GM10248 (cell line): ENCODE measurements at regions of chr5 and their contacts with region 1.

Region 1: GRCh38 chr5:138352071-138352721 is at the start of gene KDM3B:
- DNase-seq: peak; percentile 95
- CTCF ChIP-seq: peak; percentile 100

Region 2: GRCh38 chr5:138213161-138214029 is 138.8 kb before region 1 on chr5 and contains the start of gene CDC23:
- CTCF ChIA-PET with region 1: interaction called, 11 read pairs
- POLR2A ChIA-PET with region 1: no interaction called
- DNase-seq: peak; percentile 98
- CTCF ChIP-seq: no peak

Region 3: GRCh38 chr5:138241688-138242571 is 110.3 kb before region 1 on chr5:
- CTCF ChIA-PET with region 1: interaction called, 21 read pairs
- POLR2A ChIA-PET with region 1: no interaction called
- DNase-seq: peak; percentile 37
- CTCF ChIP-seq: no peak

Region 4: DNA sequence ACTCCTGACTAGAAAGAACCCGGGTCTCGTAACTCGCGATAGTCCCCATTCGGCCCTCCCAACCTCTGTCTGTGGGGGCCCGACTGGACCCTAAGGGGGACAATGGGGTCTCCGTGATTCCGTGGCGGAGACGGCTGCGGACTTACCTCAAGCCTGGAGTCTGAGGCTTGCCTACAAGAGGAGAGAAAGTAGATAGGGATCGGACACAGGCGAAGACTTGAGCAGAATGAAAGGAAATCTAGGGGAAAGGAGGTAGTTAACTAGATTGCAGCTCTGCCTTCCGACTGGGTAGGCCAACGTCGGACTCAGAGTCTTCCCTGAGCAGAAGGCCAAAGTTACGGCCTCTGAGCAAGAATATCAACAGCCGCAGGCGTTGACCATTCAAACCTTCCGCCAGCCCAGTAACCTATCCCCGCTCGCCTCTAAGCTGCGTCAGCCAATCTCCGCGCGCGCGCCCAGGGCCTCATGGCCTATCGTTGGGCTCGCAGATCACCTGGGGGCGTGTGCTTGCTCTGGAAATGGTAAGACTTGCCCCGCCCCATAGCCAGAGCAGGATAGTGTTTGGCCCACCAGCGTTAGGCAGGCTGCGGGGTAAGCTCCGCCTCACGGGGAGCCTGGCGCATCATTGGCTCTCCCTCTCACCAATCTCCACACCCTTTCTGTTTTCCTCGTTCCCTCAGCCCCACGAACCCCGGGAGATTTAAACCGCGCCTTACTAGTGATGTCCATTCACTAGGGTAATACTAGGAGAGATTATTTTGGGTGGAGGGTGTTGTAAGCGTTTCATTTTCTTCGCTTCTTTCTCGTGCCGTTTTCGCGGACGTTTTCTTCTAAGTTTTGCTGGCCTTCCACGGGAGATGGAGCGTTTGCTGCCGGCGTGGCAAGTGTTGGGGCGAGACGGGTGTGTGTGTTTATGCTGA is 20.5 kb before region 1 on chr5 and contains the start of gene CDC25C:
- CTCF ChIA-PET with region 1: interaction called, 403 read pairs
- POLR2A ChIA-PET with region 1: interaction called, 166 read pairs
- DNase-seq: peak; percentile 98
- CTCF ChIP-seq: no peak

Region 5: DNA sequence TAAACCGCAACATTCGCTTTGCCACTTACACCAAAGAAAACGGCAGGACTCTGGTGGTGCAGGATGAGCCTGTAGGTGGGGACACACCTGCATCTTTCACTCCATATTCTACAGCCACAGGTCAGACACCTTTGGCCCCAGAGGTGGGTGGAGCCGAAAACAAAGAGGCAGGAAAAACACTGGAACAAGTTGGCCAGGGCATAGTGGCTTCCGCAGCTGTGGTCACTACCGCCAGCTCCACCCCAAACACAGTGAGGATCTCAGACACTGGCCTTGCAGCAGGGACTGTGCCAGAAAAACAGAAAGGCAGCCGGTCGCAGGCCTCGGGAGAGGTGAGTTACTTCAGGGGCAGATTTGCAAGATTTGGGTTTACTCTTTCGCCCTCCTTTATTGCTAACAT is 34.1 kb after region 1 on chr5:
- CTCF ChIA-PET with region 1: interaction called, 54 read pairs
- POLR2A ChIA-PET with region 1: no interaction called
- DNase-seq: no peak
- CTCF ChIP-seq: no peak

Region 6: GRCh38 chr5:138449501-138450239 is 97.5 kb after region 1 on chr5:
- CTCF ChIA-PET with region 1: interaction called, 14 read pairs
- POLR2A ChIA-PET with region 1: interaction called, 4 read pairs
- DNase-seq: peak; percentile 95
- CTCF ChIP-seq: peak; percentile 83